ENCODE measurements at regions of chr1 and their contacts with region 1.

Region 1: DNA sequence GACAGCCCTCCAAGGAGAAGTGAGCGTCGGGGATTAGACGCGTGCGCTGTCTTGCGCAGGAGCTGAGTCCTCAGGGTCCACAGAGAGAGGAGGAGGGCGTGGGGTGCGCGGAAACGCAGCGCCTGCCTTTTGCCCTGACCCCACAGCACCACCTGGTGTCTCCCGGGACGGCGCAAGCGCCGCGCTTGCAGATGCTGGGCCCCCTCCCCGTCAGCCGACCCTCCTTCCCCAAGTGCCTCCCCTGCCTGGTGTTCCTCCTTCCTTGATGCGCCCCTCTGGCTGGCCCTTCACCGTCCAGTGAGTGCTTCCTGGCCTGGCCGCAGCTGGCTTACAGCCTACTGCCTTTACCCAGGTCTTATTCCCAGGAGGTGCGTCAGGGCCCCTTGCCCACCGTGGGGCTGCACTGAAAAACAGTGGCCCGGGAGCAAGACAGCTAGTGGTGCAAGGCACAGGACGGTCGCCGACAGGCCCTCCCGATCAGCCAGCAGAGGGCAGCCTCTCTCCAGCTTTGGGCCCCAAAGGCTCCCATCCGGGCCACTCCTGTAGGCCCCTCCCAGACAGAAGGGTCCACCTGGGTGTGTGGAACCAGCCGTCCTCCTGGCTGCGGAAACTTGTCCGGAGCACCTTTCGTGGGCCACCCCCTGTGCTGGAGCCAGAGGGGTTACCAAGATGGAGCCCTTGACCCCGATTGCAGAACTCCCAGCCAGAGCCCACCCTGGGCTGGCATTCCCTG is 12.9 kb upstream of the PHLDA3 start:
- DNase-seq: peak; percentile 67 to 88 (median 76)
- ATAC-seq: peak; percentile 82
- H3K4me3 ChIP-seq: peak overlapping the region; percentile 46
- H3K4me3 Mint-ChIP-seq: peak overlapping the region; percentile 79
- H3K27ac ChIP-seq: no peak overlapping the region
- H3K27ac Mint-ChIP-seq: no peak overlapping the region
- H3K4me1 ChIP-seq: peaks cover 26% of the 10 kb centered on the region
- H3K4me1 Mint-ChIP-seq: peaks cover 25% of the 10 kb centered on the region
- H3K27me3 ChIP-seq: peaks cover 15 to 21% of the 10 kb centered on the region in 2 experiments
- H3K27me3 Mint-ChIP-seq: peaks cover 43% of the 10 kb centered on the region
- CTCF ChIP-seq: peak; percentile 85

Region 2: DNA sequence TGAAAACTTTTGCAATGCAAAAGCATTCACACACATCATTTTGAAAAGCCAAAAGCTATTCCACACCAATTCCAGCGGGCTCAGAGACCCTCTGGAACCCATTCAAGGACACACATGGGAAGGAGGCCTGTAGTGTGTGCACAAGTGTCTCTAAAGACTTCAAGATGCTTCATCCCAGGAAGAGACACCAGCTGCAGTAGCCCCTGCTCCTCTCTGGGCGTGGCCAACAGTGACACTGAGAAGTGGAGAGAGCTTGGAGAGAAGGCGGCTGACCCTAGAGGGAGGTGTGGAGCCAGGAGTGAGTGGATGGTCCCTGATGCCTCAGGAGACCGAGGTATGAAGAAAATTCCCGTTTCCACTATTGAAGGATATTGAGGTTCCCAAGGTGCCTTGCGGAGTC is 45.5 kb before region 1 on chr1:
- CTCF ChIA-PET with region 1: interaction called, 5 read pairs
- POLR2A ChIA-PET with region 1: no interaction called
- intact Hi-C with region 1: loop called in 1 of 2 experiments (anchors 5 kb)
- DNase-seq: no peak
- ATAC-seq: no peak
- H3K4me3 ChIP-seq: no peak overlapping the region
- H3K4me3 Mint-ChIP-seq: no peak overlapping the region
- H3K27ac ChIP-seq: no peak overlapping the region
- H3K27ac Mint-ChIP-seq: no peak overlapping the region
- H3K4me1 ChIP-seq: peaks cover 5% of the 10 kb centered on the region
- H3K4me1 Mint-ChIP-seq: peaks cover 7% of the 10 kb centered on the region
- H3K27me3 ChIP-seq: no peaks in the 10 kb centered on the region
- H3K27me3 Mint-ChIP-seq: peaks cover 28% of the 10 kb centered on the region
- CTCF ChIP-seq: no peak

Region 3: GRCh38 chr1:201447911-201448871 is 33.7 kb before region 1 on chr1:
- CTCF ChIA-PET with region 1: interaction called, 9 read pairs
- POLR2A ChIA-PET with region 1: no interaction called
- intact Hi-C with region 1: loop called in 1 of 2 experiments (anchors 2 kb)
- DNase-seq: peak; percentile 36 to 77 (median 49)
- ATAC-seq: peak; percentile 78
- H3K4me3 ChIP-seq: no peak overlapping the region
- H3K4me3 Mint-ChIP-seq: no peak overlapping the region
- H3K27ac ChIP-seq: no peak overlapping the region
- H3K27ac Mint-ChIP-seq: no peak overlapping the region
- H3K4me1 ChIP-seq: peaks cover 9% of the 10 kb centered on the region
- H3K4me1 Mint-ChIP-seq: peaks cover 4% of the 10 kb centered on the region
- H3K27me3 ChIP-seq: peaks cover 0 to 2% of the 10 kb centered on the region in 2 experiments
- H3K27me3 Mint-ChIP-seq: peaks cover 10% of the 10 kb centered on the region
- CTCF ChIP-seq: peak; percentile 80

Region 4: DNA sequence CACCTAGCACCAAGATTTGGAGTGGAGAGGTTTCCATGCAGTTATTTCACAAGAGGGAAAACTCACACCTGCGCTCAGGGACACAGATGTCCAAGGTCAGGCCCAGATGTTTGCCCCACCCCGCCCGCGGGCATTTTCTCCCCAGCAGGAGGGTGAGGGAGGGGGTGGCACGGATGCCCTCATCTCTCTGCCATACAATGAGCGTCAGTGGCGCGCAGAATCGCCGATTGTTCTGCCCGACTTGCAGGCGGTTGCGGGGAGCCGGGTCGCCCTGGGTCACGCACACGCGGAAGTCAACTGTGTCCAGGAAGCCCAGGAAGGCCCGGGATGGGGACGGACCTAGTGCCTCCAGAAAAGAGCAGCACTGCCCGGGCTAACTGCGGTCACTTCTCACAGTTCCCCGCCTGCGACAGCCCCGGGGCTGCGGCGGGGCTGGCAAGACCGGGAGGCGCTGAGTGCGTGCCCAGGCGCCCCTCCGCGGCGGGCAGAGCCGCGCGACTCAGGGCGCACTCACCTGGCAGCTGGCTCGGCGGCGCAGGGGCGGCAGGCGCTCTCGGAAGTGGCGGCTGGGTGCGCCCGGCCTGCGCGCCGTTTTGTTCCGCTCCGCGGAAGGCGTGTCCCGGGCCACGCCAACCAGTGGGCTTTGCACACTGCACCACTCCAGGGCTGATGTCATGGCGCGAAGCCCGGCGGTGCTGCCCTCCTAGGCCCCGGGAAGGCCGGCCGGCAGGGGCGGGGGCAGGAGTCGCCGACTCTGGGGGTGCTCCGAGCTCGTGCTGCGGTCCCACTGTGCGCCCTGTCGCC is 24.8 kb after region 1 on chr1 and contains the start of gene CSRP1:
- CTCF ChIA-PET with region 1: interaction called, 187 read pairs
- POLR2A ChIA-PET with region 1: interaction called, 36 read pairs
- intact Hi-C with region 1: no loop called
- DNase-seq: peak; percentile 66 to 91 (median 77)
- ATAC-seq: peak; percentile 95
- H3K4me3 ChIP-seq: peak within 1 kb of the TSS; percentile 82
- H3K4me3 Mint-ChIP-seq: peak within 1 kb of the TSS; percentile 96
- H3K27ac ChIP-seq: peak within 1 kb of the TSS; percentile 37 to 58
- H3K27ac Mint-ChIP-seq: peak within 1 kb of the TSS; percentile 86
- H3K4me1 ChIP-seq: peaks cover 40% of the 10 kb centered on the region
- H3K4me1 Mint-ChIP-seq: peaks cover 49% of the 10 kb centered on the region
- H3K27me3 ChIP-seq: no peaks in the 10 kb centered on the region
- H3K27me3 Mint-ChIP-seq: no peaks in the 10 kb centered on the region
- CTCF ChIP-seq: peak; percentile 20
- total RNA-seq, gene CSRP1: 34.8 to 39.9 TPM

Region 5: DNA sequence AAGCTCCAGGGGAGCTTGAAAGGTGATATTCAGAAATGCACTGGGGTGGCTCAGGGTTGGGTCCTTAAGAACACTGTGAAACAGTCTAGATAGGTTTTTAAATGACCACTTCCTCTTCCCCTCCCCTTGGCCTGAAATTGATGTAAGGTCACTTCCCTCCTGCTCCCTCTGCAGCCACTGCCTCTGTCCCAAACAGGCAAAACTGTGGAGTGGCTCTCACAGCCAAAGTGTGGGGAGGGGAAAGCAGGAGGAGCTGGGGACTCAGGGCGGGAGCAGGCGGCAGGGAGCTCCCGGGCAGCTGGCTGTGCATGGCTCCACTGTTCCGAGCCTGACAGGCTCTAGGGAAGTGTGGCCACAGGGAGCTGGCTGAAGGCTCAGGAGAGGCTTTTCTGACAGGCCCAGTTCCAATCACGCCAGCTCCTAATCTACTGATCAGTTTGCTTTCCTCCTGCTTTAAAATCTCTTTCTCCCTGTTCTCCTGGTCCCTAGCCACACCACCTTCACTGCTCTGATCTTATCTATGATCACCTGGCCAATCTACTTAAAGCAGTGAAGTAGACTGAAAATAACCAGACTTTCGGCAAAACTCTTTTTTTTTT is 30.1 kb after region 1 on chr1:
- CTCF ChIA-PET with region 1: interaction called, 187 read pairs
- POLR2A ChIA-PET with region 1: interaction called, 36 read pairs
- intact Hi-C with region 1: loop called (anchors 1 kb)
- DNase-seq: peak in 1 of 14 experiments; percentile 21
- ATAC-seq: no peak
- H3K4me3 ChIP-seq: no peak overlapping the region
- H3K4me3 Mint-ChIP-seq: no peak overlapping the region
- H3K27ac ChIP-seq: no peak overlapping the region
- H3K27ac Mint-ChIP-seq: no peak overlapping the region
- H3K4me1 ChIP-seq: peaks cover 15% of the 10 kb centered on the region
- H3K4me1 Mint-ChIP-seq: peaks cover 29% of the 10 kb centered on the region
- H3K27me3 ChIP-seq: no peaks in the 10 kb centered on the region
- H3K27me3 Mint-ChIP-seq: no peaks in the 10 kb centered on the region
- CTCF ChIP-seq: no peak

Region 6: GRCh38 chr1:201709564-201710295 is 227.8 kb after region 1 on chr1:
- CTCF ChIA-PET with region 1: no interaction called
- POLR2A ChIA-PET with region 1: no interaction called
- intact Hi-C with region 1: loop called in 1 of 2 experiments (anchors 10 kb)
- DNase-seq: peak; percentile 27 to 67 (median 45)
- ATAC-seq: peak; percentile 78
- H3K4me3 ChIP-seq: no peak overlapping the region
- H3K4me3 Mint-ChIP-seq: no peak overlapping the region
- H3K27ac ChIP-seq: no peak overlapping the region
- H3K27ac Mint-ChIP-seq: no peak overlapping the region
- H3K4me1 ChIP-seq: peaks cover 3% of the 10 kb centered on the region
- H3K4me1 Mint-ChIP-seq: no peaks in the 10 kb centered on the region
- H3K27me3 ChIP-seq: no peaks in the 10 kb centered on the region
- H3K27me3 Mint-ChIP-seq: no peaks in the 10 kb centered on the region
- CTCF ChIP-seq: peak; percentile 80